BJ (cell line): ENCODE measurements at regions of chr16 and their contacts with region 1.

Region 1: GRCh38 chr16:86575754-86576557 is 2.4 kb upstream of the FOXL1 start:
- DNase-seq: peak; percentile 65
- H3K4me3 ChIP-seq: peak overlapping the region; percentile 48
- H3K27me3 ChIP-seq: no peaks in the 10 kb centered on the region
- CTCF ChIP-seq: peak; percentile 93

Region 2: DNA sequence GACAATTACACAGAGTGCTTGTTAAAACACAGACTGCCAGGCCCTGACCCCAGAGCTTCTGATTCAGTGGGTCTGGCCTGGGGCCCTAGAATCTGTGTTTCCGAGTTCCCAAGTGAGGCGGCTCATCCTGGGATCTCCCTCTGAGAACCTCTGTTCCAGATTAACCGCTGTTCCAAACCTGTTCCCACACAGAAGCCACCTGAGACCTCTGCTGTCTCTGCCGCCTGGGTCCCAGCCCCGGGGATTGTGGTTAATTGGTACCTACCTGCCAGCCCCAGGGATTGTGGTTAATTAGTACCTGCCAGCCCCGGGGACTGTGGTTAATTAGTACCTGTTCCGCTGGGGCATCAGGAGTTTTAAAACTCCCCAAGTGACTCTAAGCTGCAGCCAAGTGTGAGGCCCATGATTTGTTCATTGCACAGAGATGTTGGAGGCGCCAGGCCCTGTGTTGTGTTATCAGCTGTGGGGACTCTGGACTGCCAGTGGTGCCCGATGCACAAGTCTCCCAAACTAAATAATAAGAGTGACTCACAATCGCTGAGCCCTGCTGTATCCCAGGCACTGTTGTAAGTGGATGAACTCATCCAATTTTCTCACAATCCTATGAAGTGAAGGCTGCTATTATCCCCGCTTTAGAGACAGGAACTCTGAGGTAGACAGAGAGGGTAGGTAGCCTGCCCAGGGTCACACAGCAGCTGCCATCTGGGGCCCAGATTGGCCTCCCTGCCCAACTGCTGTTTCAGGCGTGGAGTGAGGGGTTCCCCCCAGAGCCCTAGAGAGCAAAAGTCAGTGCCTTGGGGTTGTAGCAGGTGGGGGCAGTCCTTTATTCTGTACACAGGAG is 457.3 kb before region 1 on chr16:
- CTCF ChIA-PET with region 1: no interaction called
- POLR2A ChIA-PET with region 1: no interaction called
- DNase-seq: no peak
- H3K4me3 ChIP-seq: no peak overlapping the region
- H3K27me3 ChIP-seq: peaks cover 21% of the 10 kb centered on the region
- CTCF ChIP-seq: no peak

Region 3: GRCh38 chr16:86594721-86595120 is 18.8 kb after region 1 on chr16:
- CTCF ChIA-PET with region 1: interaction called, 4 read pairs
- POLR2A ChIA-PET with region 1: interaction called, 23 read pairs
- DNase-seq: no peak
- H3K4me3 ChIP-seq: no peak overlapping the region
- H3K27me3 ChIP-seq: no peaks in the 10 kb centered on the region
- CTCF ChIP-seq: no peak

Region 4: DNA sequence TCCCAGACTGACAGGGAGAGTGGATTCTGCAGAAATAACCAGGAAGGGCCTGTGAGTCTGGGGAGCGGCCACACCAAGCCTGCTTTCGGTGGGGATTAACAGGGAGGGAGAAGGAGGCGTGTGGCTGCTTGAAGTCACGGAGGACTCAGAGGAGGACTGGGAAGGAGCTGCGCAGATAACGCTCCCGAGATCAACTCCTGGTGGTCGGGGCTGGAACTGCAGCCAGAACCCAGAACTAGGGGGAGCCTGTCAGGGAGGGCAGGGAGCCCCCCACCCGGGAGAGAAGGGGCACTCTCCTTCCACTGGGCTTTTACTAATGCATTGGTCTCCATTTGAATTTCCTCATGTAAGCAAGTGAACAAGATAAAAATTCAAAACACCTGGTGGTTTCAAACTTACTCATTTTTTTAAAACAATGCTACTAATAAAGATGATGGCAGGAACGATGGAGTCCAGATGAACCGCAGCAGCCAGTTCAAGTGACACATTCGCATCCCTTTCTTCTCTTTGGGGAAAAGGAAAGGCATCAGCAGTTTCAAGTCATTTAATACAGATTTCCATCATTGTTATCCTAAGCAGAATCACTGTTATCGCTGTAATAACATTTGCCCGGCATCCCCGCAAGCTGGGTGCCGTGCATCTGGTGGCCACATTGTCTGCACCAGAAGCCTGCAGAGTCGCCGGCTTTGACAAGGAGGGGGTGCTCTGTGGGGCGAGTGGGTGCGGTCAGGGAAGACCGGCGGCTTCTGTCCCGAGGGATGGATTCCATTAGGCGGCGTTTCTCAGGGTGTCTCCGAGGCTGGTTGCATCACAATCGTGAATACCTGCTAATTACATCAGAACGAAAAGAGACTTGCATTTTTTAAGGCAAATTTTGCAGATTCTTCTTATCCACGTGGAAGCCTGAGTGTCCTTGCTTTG is 185.4 kb after region 1 on chr16:
- CTCF ChIA-PET with region 1: interaction called, 16 read pairs
- POLR2A ChIA-PET with region 1: no interaction called
- DNase-seq: peak; percentile 61
- H3K4me3 ChIP-seq: 0 out of 2 replicates have a peak overlapping the region, but pooled peaks have one; percentile 1
- H3K27me3 ChIP-seq: peaks cover 2% of the 10 kb centered on the region; the same call in 1 of the 2 replicates
- CTCF ChIP-seq: peak; percentile 93

Region 5: GRCh38 chr16:86809458-86809981 is 233.6 kb after region 1 on chr16:
- CTCF ChIA-PET with region 1: interaction called, 6 read pairs
- POLR2A ChIA-PET with region 1: interaction called, 22 read pairs
- DNase-seq: peak; percentile 31
- H3K4me3 ChIP-seq: no peak overlapping the region
- H3K27me3 ChIP-seq: peaks cover 17% of the 10 kb centered on the region
- CTCF ChIP-seq: no peak

Region 6: GRCh38 chr16:86854058-86854621 is 278.2 kb after region 1 on chr16:
- CTCF ChIA-PET with region 1: no interaction called
- POLR2A ChIA-PET with region 1: interaction called, 11 read pairs
- DNase-seq: peak; percentile 99
- H3K4me3 ChIP-seq: no peak overlapping the region
- H3K27me3 ChIP-seq: peaks cover 10% of the 10 kb centered on the region
- CTCF ChIP-seq: no peak